ENCODE measurements at regions of chr17 and their contacts with region 1.

Region 1: GRCh38 chr17:18033442-18034099 is 5.4 kb downstream of the ATPAF2 start:
- DNase-seq: peak in 1 of 2 donors; percentile 79
- ATAC-seq: peak; percentile 74 to 94 (median 88)
- H3K4me3 ChIP-seq: no peak overlapping the region
- H3K27ac ChIP-seq: peak overlapping the region in 1 of 10 donors; percentile 77
- H3K4me1 ChIP-seq: peaks cover 3 to 54% (median 39%) of the 10 kb centered on the region in 9 donors
- H3K27me3 ChIP-seq: no peaks in the 10 kb centered on the region
- CTCF ChIP-seq: peak; percentile 34 to 81 (median 65)

Region 2: DNA sequence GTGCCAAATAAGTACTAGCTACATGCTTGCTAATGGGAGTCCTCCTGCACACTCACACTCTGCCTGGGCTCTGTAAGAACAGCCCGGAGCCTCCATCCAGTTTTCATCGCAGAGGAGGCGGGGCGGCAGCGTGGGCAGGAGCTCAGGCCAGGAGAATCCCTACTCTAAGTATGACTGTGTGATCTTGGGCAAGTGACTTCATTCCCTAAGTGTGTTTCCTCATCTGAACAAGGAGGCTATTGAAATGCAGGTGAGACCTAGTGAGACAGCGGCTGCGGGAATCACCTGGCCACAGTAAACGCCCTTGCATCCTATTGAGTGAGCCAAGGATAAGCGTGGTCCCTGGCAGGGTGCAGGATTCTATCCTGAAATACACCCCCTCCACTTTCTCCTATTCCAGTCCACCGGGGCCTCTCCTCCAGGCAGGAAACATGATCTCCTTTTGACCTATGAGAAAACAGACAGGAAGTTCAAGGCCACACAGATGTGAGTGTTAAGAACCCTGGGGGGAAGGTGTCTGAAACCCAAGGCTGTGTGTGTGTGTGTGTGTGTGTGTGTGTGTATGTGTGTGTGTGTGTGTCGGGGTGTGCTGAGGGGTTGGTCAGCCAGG is 357.5 kb before region 1 on chr17:
- intact Hi-C with region 1: loop called (anchors 2 to 10 kb)
- DNase-seq: no peak
- ATAC-seq: no peak
- H3K4me3 ChIP-seq: no peak overlapping the region
- H3K27ac ChIP-seq: no peak overlapping the region
- H3K4me1 ChIP-seq: peaks cover 0 to 34% (median 30%) of the 10 kb centered on the region in 9 donors
- H3K27me3 ChIP-seq: no peaks in the 10 kb centered on the region
- CTCF ChIP-seq: no peak

Region 3: GRCh38 chr17:17890773-17891759 is 142.5 kb before region 1 on chr17:
- intact Hi-C with region 1: loop called in 9 of 10 experiments (anchors 5 to 10 kb)
- DNase-seq: peak; percentile 38 to 42
- ATAC-seq: peak; percentile 49 to 76 (median 66)
- H3K4me3 ChIP-seq: no peak overlapping the region
- H3K27ac ChIP-seq: peak overlapping the region in 1 of 10 donors; percentile 12
- H3K4me1 ChIP-seq: peaks cover 4 to 43% (median 27%) of the 10 kb centered on the region in 9 donors
- H3K27me3 ChIP-seq: no peaks in the 10 kb centered on the region
- CTCF ChIP-seq: peak; percentile 36 to 75 (median 66)

Region 4: GRCh38 chr17:17994271-17995069 is 39.1 kb before region 1 on chr17:
- intact Hi-C with region 1: loop called in 7 of 10 experiments (anchors 2 to 5 kb)
- DNase-seq: peak; percentile 17 to 37
- ATAC-seq: peak; percentile 34 to 85 (median 78)
- H3K4me3 ChIP-seq: no peak overlapping the region
- H3K27ac ChIP-seq: no peak overlapping the region
- H3K4me1 ChIP-seq: peaks cover 0 to 9% (median 0%) of the 10 kb centered on the region in 9 donors
- H3K27me3 ChIP-seq: no peaks in the 10 kb centered on the region
- CTCF ChIP-seq: peak in 8 of 9 donors; percentile 15 to 63 (median 54)